Posterior cingulate gyrus (tissue), 11 donors: ENCODE measurements at regions of chr1 and their contacts with region 1.

Region 1: GRCh38 chr1:244652699-244653466 is at the start of gene DESI2:
- DNase-seq: peak; percentile 97 to 100 (median 98)

Region 2: DNA sequence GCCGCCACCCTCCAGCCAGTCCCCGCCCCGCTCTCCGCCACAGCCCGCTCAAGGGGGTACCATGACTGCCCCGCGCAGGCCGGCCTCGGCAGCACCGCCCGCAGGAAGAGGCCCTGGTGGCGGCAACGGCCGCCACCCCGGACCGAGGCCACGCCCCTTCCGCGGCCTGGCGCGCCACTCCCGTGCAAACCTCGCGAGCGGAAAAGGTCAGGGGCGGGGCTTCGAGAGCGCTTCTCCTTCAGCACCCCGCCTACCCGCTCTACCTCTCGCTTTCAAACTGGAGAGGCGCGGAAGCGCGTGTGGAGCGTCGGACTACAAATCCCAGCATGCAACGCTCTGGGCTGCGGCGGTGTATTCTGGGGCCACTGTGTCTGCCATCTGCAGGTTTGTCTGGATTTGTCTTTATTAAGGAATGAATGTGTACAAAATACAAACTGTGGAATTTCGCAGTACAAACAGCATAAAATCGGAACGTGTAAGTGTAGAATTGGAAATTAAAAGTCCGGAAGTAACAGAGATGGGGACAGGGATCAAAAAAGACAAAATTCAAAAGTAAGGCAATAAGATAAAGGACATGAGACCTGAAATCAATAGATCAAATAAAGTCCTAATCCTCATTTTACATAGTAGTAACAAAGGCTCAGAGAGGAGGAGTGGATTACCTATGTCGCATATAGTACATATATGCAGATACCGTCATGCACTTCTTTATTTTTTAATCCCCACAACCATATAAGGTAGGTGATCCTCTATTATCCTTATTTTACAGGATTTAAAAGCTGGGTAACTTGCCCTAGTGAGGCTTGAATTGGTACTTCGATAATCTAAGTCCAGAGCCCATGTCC is 200.7 kb before region 1 on chr1:
- intact Hi-C with region 1: loop called (anchors 10 kb)
- DNase-seq: peak; percentile 96 to 100 (median 98)

Region 3: GRCh38 chr1:244583358-244583982 is 69.4 kb before region 1 on chr1:
- intact Hi-C with region 1: no loop called
- DNase-seq: no peak

Region 4: DNA sequence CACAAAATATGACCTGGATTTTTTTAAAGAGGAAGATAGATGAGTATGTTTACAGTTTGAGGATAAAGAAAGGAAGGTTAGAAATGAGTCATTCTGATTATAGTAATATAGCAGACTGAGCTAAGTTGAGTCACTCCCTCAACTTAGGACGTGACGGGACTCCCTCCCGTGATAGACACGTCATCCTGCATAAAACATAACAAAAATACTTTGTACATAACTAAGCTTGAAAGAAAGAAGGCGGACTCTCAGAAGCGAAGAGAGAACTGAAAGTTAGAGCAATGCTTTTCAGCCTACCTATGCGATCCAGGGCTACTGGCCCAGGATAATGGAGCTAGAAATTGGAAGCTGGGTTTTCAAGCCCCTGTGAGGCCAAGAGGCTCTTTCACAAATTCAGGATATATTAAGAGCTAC is 52.9 kb before region 1 on chr1:
- intact Hi-C with region 1: loop called (anchors 5 kb)
- DNase-seq: no peak

Region 5: GRCh38 chr1:244835276-244836134 is 182.6 kb after region 1 on chr1 and contains the start of gene COX20:
- intact Hi-C with region 1: loop called (anchors 10 kb)
- DNase-seq: peak; percentile 78 to 96 (median 84)